ENCODE measurements at regions of chrX and their contacts with region 1.

Region 1: GRCh38 chrX:45849253-45849862 is 648.7 kb upstream of the DIPK2B start:
- DNase-seq: peak; percentile 35
- ATAC-seq: no peak
- H3K4me3 Mint-ChIP-seq: peak overlapping the region; percentile 99
- H3K27ac Mint-ChIP-seq: peak overlapping the region; percentile 98
- H3K4me1 Mint-ChIP-seq: peaks cover 39% of the 10 kb centered on the region
- H3K27me3 Mint-ChIP-seq: no peaks in the 10 kb centered on the region

Region 2: DNA sequence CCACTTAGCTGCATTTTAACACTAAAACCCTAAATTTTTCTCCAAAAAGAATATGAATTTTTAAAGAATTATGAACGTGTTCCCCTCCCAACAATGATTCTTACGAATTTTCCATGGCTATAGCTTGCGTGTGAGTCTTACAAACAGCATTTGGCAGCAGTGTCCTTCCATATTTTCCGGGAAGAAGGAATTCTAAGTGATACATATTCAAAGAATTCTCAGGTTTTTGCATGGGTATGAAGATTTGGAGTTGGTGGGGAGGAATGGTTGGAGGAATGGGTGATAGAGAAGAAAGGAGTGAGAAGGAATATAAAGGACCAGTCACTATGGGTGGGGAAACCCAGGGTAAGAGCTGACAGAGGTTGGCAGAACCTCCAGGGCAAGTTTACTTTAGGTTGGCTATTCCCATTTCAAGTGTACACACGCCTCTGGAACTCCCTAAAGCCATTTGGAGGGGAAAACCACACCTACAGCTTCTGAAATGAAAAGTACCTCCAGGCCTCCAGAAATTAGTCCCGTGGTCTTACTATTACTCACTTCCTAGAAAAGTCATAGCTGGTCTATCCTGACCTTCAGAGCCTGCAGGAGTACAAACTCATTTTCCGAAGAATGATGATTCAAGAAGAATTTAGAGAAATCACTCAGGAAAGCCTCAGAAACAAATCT is 227.8 kb before region 1 on chrX:
- CTCF ChIA-PET with region 1: no interaction called
- POLR2A ChIA-PET with region 1: no interaction called
- intact Hi-C with region 1: loop called in 1 of 2 experiments (anchors 2 kb)
- DNase-seq: peak; percentile 20
- ATAC-seq: peak; percentile 88
- H3K4me3 Mint-ChIP-seq: no peak overlapping the region
- H3K27ac Mint-ChIP-seq: peak overlapping the region; percentile 37
- H3K4me1 Mint-ChIP-seq: peaks cover 30% of the 10 kb centered on the region
- H3K27me3 Mint-ChIP-seq: peaks cover 3% of the 10 kb centered on the region

Region 3: DNA sequence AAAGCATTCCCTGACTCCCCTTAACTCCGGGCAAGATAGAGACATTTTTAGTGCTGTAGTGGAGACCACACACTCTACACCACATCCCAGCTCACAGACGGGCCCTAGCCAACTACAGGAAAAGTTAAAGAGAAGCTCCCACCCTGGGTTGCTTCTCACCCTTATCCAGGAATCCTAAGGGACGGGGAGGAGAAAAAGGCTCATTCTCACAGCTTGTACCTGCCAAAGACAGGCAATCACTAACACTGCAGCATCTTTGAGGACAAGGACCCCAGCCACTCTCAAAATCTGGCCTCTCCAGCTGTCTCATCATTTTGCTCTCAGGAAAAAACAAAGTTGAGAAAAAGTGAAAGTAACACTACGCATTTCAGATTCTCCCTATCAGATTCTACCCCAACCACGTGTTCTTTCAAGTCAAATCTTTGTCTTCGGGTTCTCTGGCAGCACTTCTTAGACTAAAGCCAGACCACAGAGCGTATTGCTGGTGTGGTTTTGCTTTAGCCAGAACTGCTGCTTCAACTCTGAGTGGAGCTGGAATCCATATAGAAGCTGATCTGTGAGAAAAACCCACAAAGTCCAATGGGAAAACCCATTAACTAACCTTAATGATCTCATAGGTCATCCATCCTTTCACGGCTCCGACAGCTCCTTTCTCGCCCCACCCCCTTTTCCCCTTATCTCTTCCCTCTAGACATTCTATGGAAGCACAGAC is 42.8 kb before region 1 on chrX:
- CTCF ChIA-PET with region 1: interaction called, 3 read pairs
- POLR2A ChIA-PET with region 1: interaction called, 9 read pairs
- intact Hi-C with region 1: loop called in 1 of 2 experiments (anchors 1 kb)
- DNase-seq: peak; percentile 65
- ATAC-seq: peak; percentile 52
- H3K4me3 Mint-ChIP-seq: peak overlapping the region; percentile 68
- H3K27ac Mint-ChIP-seq: peak overlapping the region; percentile 88
- H3K4me1 Mint-ChIP-seq: peaks cover 85% of the 10 kb centered on the region
- H3K27me3 Mint-ChIP-seq: no peaks in the 10 kb centered on the region

Region 4: GRCh38 chrX:46059316-46059715 is 210.0 kb after region 1 on chrX:
- CTCF ChIA-PET with region 1: no interaction called
- POLR2A ChIA-PET with region 1: no interaction called
- intact Hi-C with region 1: no loop called
- DNase-seq: no peak
- ATAC-seq: no peak
- H3K4me3 Mint-ChIP-seq: no peak overlapping the region
- H3K27ac Mint-ChIP-seq: no peak overlapping the region
- H3K4me1 Mint-ChIP-seq: no peaks in the 10 kb centered on the region
- H3K27me3 Mint-ChIP-seq: peaks cover 2% of the 10 kb centered on the region

Region 5: DNA sequence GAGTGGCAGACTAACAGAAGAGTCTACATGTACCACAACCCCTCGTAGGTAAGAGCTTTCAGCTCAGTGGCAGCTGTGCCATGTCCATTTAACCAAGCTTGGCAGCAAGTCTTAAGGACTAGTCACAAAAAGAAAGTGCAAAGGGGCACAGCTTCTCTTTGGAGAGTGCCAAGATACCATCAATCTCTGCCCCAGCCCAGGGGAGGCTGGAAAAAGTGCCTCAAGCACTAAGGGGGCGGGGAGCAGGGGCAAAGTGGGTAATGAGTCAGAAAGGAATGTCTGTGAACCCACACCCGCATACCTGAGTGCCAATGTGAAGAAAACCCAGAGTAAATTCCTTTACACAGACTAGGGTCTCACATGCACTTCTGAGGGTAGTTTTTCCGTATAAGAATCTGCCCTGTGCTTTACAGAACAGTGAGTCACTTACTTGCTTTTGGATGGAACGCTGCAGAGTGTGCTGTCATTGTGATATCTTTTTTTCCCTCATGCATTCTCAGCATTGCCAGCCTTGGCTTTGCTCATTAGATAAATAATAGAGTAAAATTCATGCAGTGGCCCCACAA is 476.0 kb after region 1 on chrX:
- CTCF ChIA-PET with region 1: no interaction called
- POLR2A ChIA-PET with region 1: interaction called, 8 read pairs
- intact Hi-C with region 1: loop called (anchors 1 to 5 kb)
- DNase-seq: peak; percentile 78
- ATAC-seq: peak; percentile 83
- H3K4me3 Mint-ChIP-seq: peak overlapping the region; percentile 3
- H3K27ac Mint-ChIP-seq: peak overlapping the region; percentile 76
- H3K4me1 Mint-ChIP-seq: peaks cover 62% of the 10 kb centered on the region
- H3K27me3 Mint-ChIP-seq: no peaks in the 10 kb centered on the region

Region 6: DNA sequence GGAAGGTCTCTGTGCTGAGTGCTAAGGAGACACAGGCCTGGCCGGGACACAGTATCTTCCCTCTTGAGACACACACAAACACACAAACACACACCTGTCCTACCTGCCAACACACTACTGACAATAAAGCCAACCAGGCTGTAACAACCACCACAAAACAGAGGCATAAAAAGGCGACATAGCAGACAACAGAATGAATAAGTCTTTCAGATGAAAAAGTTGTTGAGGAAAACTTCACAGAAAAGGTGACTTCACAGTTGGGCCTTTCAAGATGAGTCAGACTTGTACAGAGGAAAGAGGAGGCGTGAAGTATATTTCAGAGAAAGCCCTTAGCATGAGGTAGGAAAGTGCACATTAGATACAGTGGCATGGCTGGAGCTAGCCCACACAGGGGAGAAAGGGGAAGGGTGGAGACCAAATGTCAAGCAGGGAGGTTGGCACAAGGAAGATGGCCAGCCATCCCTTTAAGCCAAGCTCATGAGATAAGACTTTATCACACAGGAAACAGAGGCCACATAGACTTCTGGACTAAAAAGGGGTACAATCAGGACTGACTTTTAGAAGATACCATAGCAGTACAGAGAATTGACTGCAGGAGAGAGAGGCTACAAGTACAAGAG is 855.5 kb after region 1 on chrX:
- CTCF ChIA-PET with region 1: no interaction called
- POLR2A ChIA-PET with region 1: interaction called, 12 read pairs
- intact Hi-C with region 1: no loop called
- DNase-seq: peak; percentile 44
- ATAC-seq: peak; percentile 96
- H3K4me3 Mint-ChIP-seq: peak overlapping the region; percentile 64
- H3K27ac Mint-ChIP-seq: peak overlapping the region; percentile 94
- H3K4me1 Mint-ChIP-seq: peaks cover 58% of the 10 kb centered on the region
- H3K27me3 Mint-ChIP-seq: no peaks in the 10 kb centered on the region